Common myeloid progenitor, CD34-positive (primary cell): ENCODE measurements at regions of chr2 and their contacts with region 1.

Region 1: DNA sequence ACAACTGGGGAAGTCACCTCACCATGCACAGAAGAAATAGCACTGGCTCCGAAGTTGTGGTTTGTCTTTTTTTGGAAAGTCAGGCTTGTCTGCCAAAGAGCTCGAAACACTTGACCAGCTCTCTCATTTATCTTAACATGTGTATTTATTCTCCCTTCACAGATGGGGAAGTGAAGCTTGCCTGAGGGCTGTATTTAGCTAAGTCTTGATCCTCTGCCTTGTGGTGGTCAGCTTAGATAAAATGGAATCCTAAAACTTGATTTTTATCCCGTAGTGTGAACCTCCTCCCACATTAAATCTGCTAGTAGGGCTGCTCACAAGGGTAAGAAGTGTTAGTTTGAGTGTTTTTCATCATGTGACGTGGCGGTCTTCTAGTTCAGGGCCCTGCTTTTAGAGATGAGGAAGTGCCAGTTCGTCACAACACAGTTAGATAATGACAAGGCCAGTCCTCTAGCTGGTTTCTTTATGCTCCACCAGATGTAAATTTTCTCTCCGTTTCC is 89.7 kb downstream of the TMEM247 start:
- DNase-seq: peak; percentile 75 to 93 (median 88)
- H3K4me3 ChIP-seq: peak overlapping the region in 5 of 7 experiments; percentile 2 to 54 (median 21)
- H3K27ac ChIP-seq: peak overlapping the region; percentile 59 to 87
- H3K4me1 ChIP-seq: peaks cover 33 to 58% (median 48%) of the 10 kb centered on the region in 4 experiments
- H3K27me3 ChIP-seq: no peaks in the 10 kb centered on the region

Region 2: GRCh38 chr2:46547223-46548102 is 21.6 kb before region 1 on chr2:
- CTCF ChIA-PET with region 1: interaction called, 25 read pairs
- POLR2A ChIA-PET with region 1: interaction called, 5 read pairs
- DNase-seq: peak in 2 of 3 donors; percentile 69 to 71
- H3K4me3 ChIP-seq: peak overlapping the region in 4 of 7 experiments; percentile 6 to 59 (median 43)
- H3K27ac ChIP-seq: peak overlapping the region; percentile 29 to 60
- H3K4me1 ChIP-seq: peaks cover 28 to 62% (median 56%) of the 10 kb centered on the region in 4 experiments
- H3K27me3 ChIP-seq: no peaks in the 10 kb centered on the region

Region 3: GRCh38 chr2:46555011-46555410 is 14.1 kb before region 1 on chr2:
- CTCF ChIA-PET with region 1: interaction called, 25 read pairs
- POLR2A ChIA-PET with region 1: interaction called, 3 read pairs
- DNase-seq: no peak
- H3K4me3 ChIP-seq: no peak overlapping the region
- H3K27ac ChIP-seq: no peak overlapping the region
- H3K4me1 ChIP-seq: peaks cover 3 to 22% (median 10%) of the 10 kb centered on the region in 4 experiments
- H3K27me3 ChIP-seq: no peaks in the 10 kb centered on the region

Region 4: DNA sequence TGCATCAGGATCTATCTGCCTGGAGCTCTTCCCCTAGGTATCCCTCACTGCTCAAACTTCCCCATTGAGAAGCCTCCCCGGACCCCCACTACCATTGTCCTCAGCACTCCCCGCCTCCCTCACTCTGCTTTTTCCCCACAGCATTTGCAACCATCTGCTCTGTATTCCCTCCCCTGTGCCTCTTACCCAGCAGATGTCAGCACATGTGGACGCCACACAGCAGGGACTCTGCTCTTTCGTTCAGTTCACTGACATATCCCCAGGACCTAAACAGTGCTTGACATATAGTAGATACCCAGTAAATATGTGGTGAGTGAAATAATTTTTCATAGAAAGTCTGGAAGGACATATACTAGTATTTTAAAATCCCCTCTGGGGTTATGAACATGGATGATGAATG is 11.3 kb after region 1 on chr2:
- CTCF ChIA-PET with region 1: interaction called, 12 read pairs
- POLR2A ChIA-PET with region 1: interaction called, 3 read pairs
- DNase-seq: no peak
- H3K4me3 ChIP-seq: no peak overlapping the region
- H3K27ac ChIP-seq: no peak overlapping the region
- H3K4me1 ChIP-seq: peaks cover 0 to 5% (median 0%) of the 10 kb centered on the region in 4 experiments
- H3K27me3 ChIP-seq: no peaks in the 10 kb centered on the region

Region 5: GRCh38 chr2:46857893-46858701 is 289.0 kb after region 1 on chr2:
- CTCF ChIA-PET with region 1: no interaction called
- POLR2A ChIA-PET with region 1: no interaction called
- DNase-seq: no peak
- H3K4me3 ChIP-seq: no peak overlapping the region
- H3K27ac ChIP-seq: no peak overlapping the region
- H3K4me1 ChIP-seq: no peaks in the 10 kb centered on the region
- H3K27me3 ChIP-seq: no peaks in the 10 kb centered on the region